ENCODE measurements at regions of chr18 and their contacts with region 1.

Region 1: DNA sequence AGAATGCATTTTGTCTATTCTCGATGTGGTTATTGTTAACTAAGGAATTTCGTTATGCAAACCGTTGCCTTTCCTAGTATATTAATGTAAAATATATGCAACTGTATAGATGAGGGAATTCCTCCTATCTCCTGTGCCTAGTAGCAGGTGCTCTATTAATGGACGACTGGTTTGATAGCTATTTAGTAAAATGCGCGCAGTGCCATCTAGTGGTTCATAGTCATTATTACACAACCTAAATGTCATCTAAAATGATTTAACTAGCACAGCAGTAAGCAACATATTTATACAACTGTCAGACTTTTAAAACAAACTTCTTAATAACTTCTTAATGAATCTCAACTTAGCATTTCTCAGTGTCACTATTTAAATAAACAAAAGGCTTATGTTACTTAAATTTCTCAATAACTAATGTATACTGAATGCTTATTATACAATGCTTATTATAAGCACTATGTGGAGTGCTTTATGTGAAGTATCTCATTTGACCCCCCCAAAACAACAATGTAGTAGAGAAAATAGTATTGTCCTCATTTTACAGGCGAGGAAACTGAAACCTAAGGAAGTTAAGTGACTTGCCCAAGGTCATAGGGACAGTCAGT is 77.9 kb downstream of the DTNA start:
- DNase-seq: no peak
- ATAC-seq: peak; percentile 82
- H3K4me3 ChIP-seq: no peak overlapping the region
- H3K27ac ChIP-seq: no peak overlapping the region
- H3K4me1 ChIP-seq: no peaks in the 10 kb centered on the region
- H3K27me3 ChIP-seq: no peaks in the 10 kb centered on the region
- CTCF ChIP-seq: peak; percentile 63; the same call in 1 of the 2 replicates

Region 2: GRCh38 chr18:34592961-34593382 is 195.1 kb before region 1 on chr18:
- CTCF ChIA-PET with region 1: no interaction called
- POLR2A ChIA-PET with region 1: no interaction called
- in situ Hi-C with region 1: no loop called
- intact Hi-C with region 1: loop called (anchors 10 kb)
- DNase-seq: no peak
- ATAC-seq: no peak
- H3K4me3 ChIP-seq: no peak overlapping the region
- H3K27ac ChIP-seq: no peak overlapping the region
- H3K4me1 ChIP-seq: no peaks in the 10 kb centered on the region
- H3K27me3 ChIP-seq: no peaks in the 10 kb centered on the region
- CTCF ChIP-seq: no peak

Region 3: DNA sequence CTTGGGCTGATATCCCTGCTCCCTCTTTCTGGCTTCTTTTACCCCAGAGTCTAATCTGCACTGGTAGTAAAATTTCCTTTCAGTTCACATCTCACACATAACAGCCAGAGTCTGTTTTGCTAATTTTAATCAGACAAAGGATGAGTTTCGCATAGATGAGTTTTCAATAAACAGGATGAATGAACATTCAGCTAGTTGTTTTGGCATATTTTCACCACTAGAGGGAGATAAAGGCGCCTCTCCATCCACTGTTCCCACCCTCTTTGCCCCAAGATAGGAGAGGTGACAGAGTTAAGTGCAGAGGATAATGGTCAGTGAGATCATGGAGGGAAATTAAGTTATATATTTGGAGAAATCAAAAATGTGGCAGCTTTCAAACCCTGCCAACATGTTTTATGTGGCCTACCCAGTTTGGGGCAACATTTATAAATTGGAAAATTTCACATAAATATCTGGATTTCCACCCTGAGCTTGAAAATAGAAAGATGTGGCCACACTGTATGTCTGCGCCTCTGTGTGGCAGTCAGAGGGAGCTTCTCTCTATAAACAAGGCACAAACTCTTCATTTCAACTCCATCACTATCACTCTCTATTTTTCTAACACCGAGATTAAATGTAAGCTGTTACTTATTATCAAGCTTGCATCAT is 126.4 kb before region 1 on chr18:
- CTCF ChIA-PET with region 1: interaction called, 7 read pairs
- POLR2A ChIA-PET with region 1: no interaction called
- in situ Hi-C with region 1: no loop called
- intact Hi-C with region 1: loop called (anchors 2 kb)
- DNase-seq: peak; percentile 41
- ATAC-seq: peak; percentile 70
- H3K4me3 ChIP-seq: no peak overlapping the region
- H3K27ac ChIP-seq: no peak overlapping the region
- H3K4me1 ChIP-seq: no peaks in the 10 kb centered on the region
- H3K27me3 ChIP-seq: no peaks in the 10 kb centered on the region
- CTCF ChIP-seq: peak; percentile 76

Measured in Panc1 (cell line).